Dendritic cell treated with granulocyte-macrophage colony-stimulating factor and Interleukin-4, amounts not matched to agents 40 ng/mL and 50 ng/mL, for 4 days (primary cell): ENCODE measurements at regions of chr6 and their contacts with region 1.

Region 1: GRCh38 chr6:28252009-28252975 is at the start of gene ZKSCAN4:
- H3K4me3 Mint-ChIP-seq: peak within 1 kb of the TSS; percentile 97
- H3K27ac Mint-ChIP-seq: peak within 1 kb of the TSS; percentile 90
- H3K4me1 Mint-ChIP-seq: peaks cover 14% of the 10 kb centered on the region
- H3K27me3 Mint-ChIP-seq: no peaks in the 10 kb centered on the region

Region 2: DNA sequence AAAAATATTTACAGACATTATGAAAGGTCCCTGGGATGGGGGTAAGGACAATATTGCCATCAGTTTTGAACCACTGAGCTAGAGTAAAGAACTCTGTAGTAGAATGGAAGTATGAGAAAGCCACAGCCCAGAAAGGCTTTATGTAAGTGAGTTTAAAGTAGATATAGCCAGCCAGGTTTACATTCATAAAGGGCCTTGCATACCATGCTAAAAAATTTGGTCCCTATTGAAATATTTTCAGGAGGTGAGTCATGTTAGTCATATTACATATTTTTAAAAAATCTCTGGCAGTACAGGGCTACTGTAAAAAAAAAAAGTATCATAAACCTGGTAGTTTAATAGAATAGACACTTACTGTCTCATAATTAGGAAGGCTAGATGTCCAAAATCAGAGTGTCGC is 107.1 kb before region 1 on chr6:
- intact Hi-C with region 1: no loop called
- H3K4me3 Mint-ChIP-seq: no peak overlapping the region
- H3K27ac Mint-ChIP-seq: no peak overlapping the region
- H3K4me1 Mint-ChIP-seq: peaks cover 34% of the 10 kb centered on the region
- H3K27me3 Mint-ChIP-seq: no peaks in the 10 kb centered on the region

Region 3: GRCh38 chr6:28218271-28219248 is 33.7 kb before region 1 on chr6:
- intact Hi-C with region 1: loop called (anchors 5 kb)
- H3K4me3 Mint-ChIP-seq: peak overlapping the region; percentile 82
- H3K27ac Mint-ChIP-seq: peak overlapping the region; percentile 90
- H3K4me1 Mint-ChIP-seq: peaks cover 19% of the 10 kb centered on the region
- H3K27me3 Mint-ChIP-seq: peaks cover 59% of the 10 kb centered on the region

Region 4: GRCh38 chr6:28266962-28267694 is 14.8 kb after region 1 on chr6 and contains the start of gene ZSCAN26:
- intact Hi-C with region 1: loop called (anchors 2 kb)
- H3K4me3 Mint-ChIP-seq: no peak within 1 kb of the TSS
- H3K27ac Mint-ChIP-seq: no peak within 1 kb of the TSS
- H3K4me1 Mint-ChIP-seq: no peaks in the 10 kb centered on the region
- H3K27me3 Mint-ChIP-seq: no peaks in the 10 kb centered on the region